ENCODE measurements at regions of chr3 and their contacts with region 1.

Region 1: GRCh38 chr3:129052675-129053074 is 7.9 kb upstream of the GP9 start:
- DNase-seq: no peak
- H3K4me3 Mint-ChIP-seq: no peak overlapping the region
- H3K27ac Mint-ChIP-seq: no peak overlapping the region
- H3K4me1 Mint-ChIP-seq: peaks cover 10% of the 10 kb centered on the region
- H3K27me3 Mint-ChIP-seq: no peaks in the 10 kb centered on the region

Region 2: GRCh38 chr3:128473180-128473519 is 579.5 kb before region 1 on chr3:
- CTCF ChIA-PET with region 1: no interaction called
- intact Hi-C with region 1: no loop called
- DNase-seq: no peak
- H3K4me3 Mint-ChIP-seq: no peak overlapping the region
- H3K27ac Mint-ChIP-seq: no peak overlapping the region
- H3K4me1 Mint-ChIP-seq: no peaks in the 10 kb centered on the region
- H3K27me3 Mint-ChIP-seq: peaks cover 3% of the 10 kb centered on the region

Region 3: DNA sequence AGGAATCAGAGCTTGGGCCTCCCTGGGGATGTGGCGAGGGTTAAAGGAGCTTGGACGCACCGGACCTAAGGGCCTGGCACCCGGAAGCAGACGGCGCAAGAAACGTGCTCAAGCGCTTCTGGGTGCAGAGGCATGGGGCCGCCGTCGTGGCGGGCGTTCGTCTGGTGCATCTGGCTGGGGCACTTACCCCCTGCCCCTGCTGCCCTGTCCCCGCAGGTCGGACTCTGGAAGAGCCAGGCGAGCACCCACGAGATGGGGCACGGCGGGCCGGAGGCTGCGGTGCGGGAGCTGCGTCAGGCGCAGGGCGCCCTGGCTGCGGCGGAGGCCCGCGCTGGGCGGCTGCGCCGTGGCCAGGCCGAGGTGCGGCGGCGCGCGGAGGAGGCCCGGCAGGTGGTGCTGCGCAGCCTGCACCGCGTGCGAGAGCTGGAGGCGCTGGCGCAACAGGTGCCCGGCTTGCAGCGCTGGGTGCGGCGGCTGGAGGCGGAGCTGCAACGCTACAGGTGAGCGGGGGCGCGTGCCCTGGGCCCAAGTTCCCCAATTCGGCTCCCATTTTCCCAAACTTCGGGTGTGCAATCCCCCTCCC is 49.0 kb before region 1 on chr3:
- CTCF ChIA-PET with region 1: interaction called, 6 read pairs
- intact Hi-C with region 1: loop called (anchors 2 kb)
- DNase-seq: peak; percentile 69
- H3K4me3 Mint-ChIP-seq: peak overlapping the region; percentile 53
- H3K27ac Mint-ChIP-seq: no peak overlapping the region
- H3K4me1 Mint-ChIP-seq: peaks cover 36% of the 10 kb centered on the region
- H3K27me3 Mint-ChIP-seq: peaks cover 21% of the 10 kb centered on the region

Region 4: GRCh38 chr3:129039271-129040038 is 13.2 kb before region 1 on chr3:
- CTCF ChIA-PET with region 1: interaction called, 14 read pairs
- intact Hi-C with region 1: no loop called
- DNase-seq: no peak
- H3K4me3 Mint-ChIP-seq: no peak overlapping the region
- H3K27ac Mint-ChIP-seq: no peak overlapping the region
- H3K4me1 Mint-ChIP-seq: peaks cover 16% of the 10 kb centered on the region
- H3K27me3 Mint-ChIP-seq: peaks cover 1% of the 10 kb centered on the region

Region 5: GRCh38 chr3:129101370-129102138 is 48.9 kb after region 1 on chr3:
- CTCF ChIA-PET with region 1: interaction called, 20 read pairs
- intact Hi-C with region 1: no loop called
- DNase-seq: no peak
- H3K4me3 Mint-ChIP-seq: no peak overlapping the region
- H3K27ac Mint-ChIP-seq: peak overlapping the region; percentile 43
- H3K4me1 Mint-ChIP-seq: peaks cover 82% of the 10 kb centered on the region
- H3K27me3 Mint-ChIP-seq: no peaks in the 10 kb centered on the region

Region 6: DNA sequence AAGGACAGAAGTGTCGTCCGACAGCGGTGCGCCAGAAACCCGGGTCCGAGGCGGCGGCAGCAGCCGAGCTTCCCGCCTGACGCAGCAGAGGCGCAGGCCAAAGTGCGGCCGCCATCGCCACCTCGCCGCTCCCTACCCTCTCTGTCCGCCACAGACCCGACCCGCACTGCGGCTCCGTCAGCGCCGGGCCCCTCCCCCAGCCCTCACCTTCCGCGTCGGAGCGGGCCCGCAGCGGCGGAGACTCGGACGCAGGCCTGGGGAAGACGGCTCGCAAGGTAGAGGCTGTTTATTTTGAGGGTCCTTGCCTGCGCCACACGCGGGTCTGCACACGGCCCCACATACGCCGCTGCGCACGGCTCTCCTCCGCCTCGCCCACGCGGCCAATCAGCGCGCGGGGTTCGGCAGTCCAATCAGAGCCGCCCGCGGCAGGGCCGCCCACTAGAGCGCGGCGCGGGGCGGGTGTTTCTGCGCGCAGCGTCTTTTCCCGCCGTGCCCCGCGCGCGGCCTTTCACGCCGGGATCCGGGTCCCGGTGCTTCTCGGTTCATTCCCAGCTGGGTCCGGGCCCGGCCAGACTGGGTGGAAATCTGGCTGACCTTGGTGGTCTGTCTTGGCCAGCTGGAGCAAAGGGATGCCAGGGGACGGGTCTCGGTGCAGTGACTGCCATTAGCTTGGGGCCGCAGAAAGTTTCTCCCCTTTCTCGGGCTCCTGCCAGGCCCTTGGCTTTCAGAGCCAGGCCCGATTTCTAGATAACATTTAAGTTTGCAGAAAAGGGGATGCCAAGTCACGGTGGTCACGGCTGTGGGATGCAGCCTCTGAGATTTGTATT is 131.1 kb after region 1 on chr3 and contains the start of gene CNBP:
- CTCF ChIA-PET with region 1: interaction called, 5 read pairs
- intact Hi-C with region 1: loop called (anchors 5 kb)
- DNase-seq: peak; percentile 93
- H3K4me3 Mint-ChIP-seq: peak within 1 kb of the TSS; percentile 96
- H3K27ac Mint-ChIP-seq: peak within 1 kb of the TSS; percentile 95
- H3K4me1 Mint-ChIP-seq: peaks cover 35% of the 10 kb centered on the region
- H3K27me3 Mint-ChIP-seq: no peaks in the 10 kb centered on the region
- total RNA-seq, gene CNBP: 490 to 500 TPM

Measured in activated naive CD4-positive, alpha-beta T cell treated with anti-CD3 and anti-CD28 coated beads for 36 hours (primary cell).